GM10248 (cell line): ENCODE measurements at regions of chr12 and their contacts with region 1.

Region 1: GRCh38 chr12:123772074-123772473 is 10.0 kb downstream of the DNAH10 start:
- DNase-seq: no peak
- CTCF ChIP-seq: no peak

Region 2: GRCh38 chr12:123512838-123513665 is 259.0 kb before region 1 on chr12:
- CTCF ChIA-PET with region 1: no interaction called
- POLR2A ChIA-PET with region 1: no interaction called
- DNase-seq: peak; percentile 16
- CTCF ChIP-seq: no peak

Region 3: GRCh38 chr12:123790905-123791467 is 18.9 kb after region 1 on chr12:
- CTCF ChIA-PET with region 1: interaction called, 14 read pairs
- POLR2A ChIA-PET with region 1: no interaction called
- DNase-seq: no peak
- CTCF ChIP-seq: no peak

Region 4: DNA sequence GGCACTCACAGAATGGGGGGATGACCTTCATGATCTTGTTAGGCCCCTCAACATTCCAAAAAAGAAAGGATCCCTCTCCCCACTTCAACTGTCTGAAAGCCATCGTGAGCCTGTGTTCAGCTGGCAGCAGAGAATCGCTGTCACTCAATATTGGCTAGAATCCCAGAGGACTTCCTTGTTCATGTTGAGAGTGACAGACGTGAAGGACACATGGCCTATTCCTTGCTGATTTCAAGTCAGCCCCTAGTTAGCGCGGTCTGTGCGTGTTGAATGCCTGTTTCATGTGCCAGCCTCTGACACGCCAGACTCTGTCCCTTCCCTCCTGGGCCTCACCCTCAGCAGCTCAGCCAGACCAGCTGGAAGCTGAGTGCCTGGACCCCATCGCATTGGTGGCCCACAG is 33.1 kb after region 1 on chr12:
- CTCF ChIA-PET with region 1: no interaction called
- POLR2A ChIA-PET with region 1: no interaction called
- DNase-seq: no peak
- CTCF ChIP-seq: no peak